ENCODE measurements at regions of chr2 and their contacts with region 1.

Region 1: GRCh38 chr2:74919827-74920226 is 38.6 kb upstream of the POLE4 start:
- DNase-seq: peak; percentile 77
- ATAC-seq: peak; percentile 34
- H3K4me3 ChIP-seq: peak overlapping the region; percentile 73
- H3K27ac ChIP-seq: no peak overlapping the region
- H3K4me1 ChIP-seq: peaks cover 40% of the 10 kb centered on the region
- H3K27me3 ChIP-seq: no peaks in the 10 kb centered on the region
- CTCF ChIP-seq: peak; percentile 82

Region 2: DNA sequence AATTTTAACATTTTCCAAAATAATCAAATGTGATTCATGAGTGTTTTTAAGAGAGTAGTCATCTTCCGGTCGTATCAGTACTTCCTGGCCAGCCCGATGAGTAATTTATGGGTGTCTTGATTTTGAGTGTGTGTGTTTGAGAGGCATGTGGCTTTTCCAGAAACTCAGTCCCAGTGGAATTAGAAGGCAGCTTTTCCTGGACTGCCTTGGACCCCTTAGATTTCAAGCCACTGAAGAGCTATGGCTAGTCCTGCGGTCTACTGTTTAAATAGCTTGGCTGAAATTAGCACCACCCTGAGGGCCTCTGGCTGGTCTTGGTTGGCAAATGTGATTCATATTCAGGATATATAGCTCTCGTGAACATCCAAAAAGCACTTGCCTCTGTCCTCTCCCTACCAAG is 26.5 kb before region 1 on chr2:
- CTCF ChIA-PET with region 1: no interaction called
- POLR2A ChIA-PET with region 1: no interaction called
- intact Hi-C with region 1: loop called (anchors 1 kb)
- DNase-seq: peak; percentile 92
- ATAC-seq: peak; percentile 77
- H3K4me3 ChIP-seq: peak overlapping the region; percentile 29; the same call in 1 of the 2 replicates
- H3K27ac ChIP-seq: peak overlapping the region; percentile 99
- H3K4me1 ChIP-seq: peaks cover 48% of the 10 kb centered on the region
- H3K27me3 ChIP-seq: no peaks in the 10 kb centered on the region
- CTCF ChIP-seq: no peak

Region 3: GRCh38 chr2:74982577-74982976 is 62.8 kb after region 1 on chr2:
- CTCF ChIA-PET with region 1: interaction called, 3 read pairs
- POLR2A ChIA-PET with region 1: no interaction called
- intact Hi-C with region 1: loop called (anchors 1 kb)
- DNase-seq: peak; percentile 53
- ATAC-seq: peak; percentile 71
- H3K4me3 ChIP-seq: no peak overlapping the region
- H3K27ac ChIP-seq: no peak overlapping the region
- H3K4me1 ChIP-seq: no peaks in the 10 kb centered on the region
- H3K27me3 ChIP-seq: no peaks in the 10 kb centered on the region
- CTCF ChIP-seq: peak; percentile 72

Region 4: GRCh38 chr2:75053484-75054112 is 133.8 kb after region 1 on chr2:
- CTCF ChIA-PET with region 1: no interaction called
- POLR2A ChIA-PET with region 1: no interaction called
- intact Hi-C with region 1: loop called (anchors 5 kb)
- DNase-seq: peak; percentile 77
- ATAC-seq: peak; percentile 100
- H3K4me3 ChIP-seq: no peak overlapping the region
- H3K27ac ChIP-seq: no peak overlapping the region
- H3K4me1 ChIP-seq: no peaks in the 10 kb centered on the region
- H3K27me3 ChIP-seq: no peaks in the 10 kb centered on the region
- CTCF ChIP-seq: peak; percentile 90

Region 5: DNA sequence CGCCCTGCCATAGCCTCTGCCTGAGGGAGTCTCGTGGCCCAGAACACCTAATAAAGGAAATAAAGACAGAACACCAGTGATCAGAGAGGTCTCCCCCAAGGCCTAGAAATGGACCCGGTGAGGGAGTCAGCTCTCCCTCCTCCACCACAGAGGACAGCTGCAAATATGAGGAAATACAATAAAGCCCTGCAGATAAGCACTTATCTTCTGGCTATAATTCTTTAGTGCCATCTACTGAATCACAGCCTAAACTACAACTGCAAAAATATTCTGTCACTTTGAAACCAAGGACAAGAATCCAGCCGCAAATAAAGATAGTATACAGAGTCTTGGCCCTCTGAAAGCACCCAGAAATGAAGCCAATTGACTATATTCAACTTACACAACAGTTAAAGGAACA is 321.9 kb after region 1 on chr2:
- CTCF ChIA-PET with region 1: no interaction called
- POLR2A ChIA-PET with region 1: no interaction called
- intact Hi-C with region 1: loop called (anchors 5 kb)
- DNase-seq: peak; percentile 66
- ATAC-seq: peak; percentile 63
- H3K4me3 ChIP-seq: no peak overlapping the region
- H3K27ac ChIP-seq: no peak overlapping the region
- H3K4me1 ChIP-seq: peaks cover 19% of the 10 kb centered on the region
- H3K27me3 ChIP-seq: no peaks in the 10 kb centered on the region
- CTCF ChIP-seq: peak; percentile 82